Mammary epithelial cell (primary cell): ENCODE measurements at regions of chr9 and their contacts with region 1.

Region 1: GRCh38 chr9:98536542-98537173 is 172.1 kb downstream of the GABBR2 start:
- DNase-seq: no peak
- H3K4me3 ChIP-seq: no peak overlapping the region
- H3K27ac ChIP-seq: no peak overlapping the region
- H3K4me1 ChIP-seq: no peaks in the 10 kb centered on the region
- H3K27me3 ChIP-seq: no peaks in the 10 kb centered on the region
- CTCF ChIP-seq: peak; percentile 20 to 40

Region 2: GRCh38 chr9:98570663-98571440 is 34.2 kb after region 1 on chr9:
- CTCF ChIA-PET with region 1: no interaction called
- dilution Hi-C with region 1: no loop called
- in situ Hi-C with region 1: no loop called
- intact Hi-C with region 1: no loop called
- DNase-seq: no peak
- H3K4me3 ChIP-seq: no peak overlapping the region
- H3K27ac ChIP-seq: no peak overlapping the region
- H3K4me1 ChIP-seq: peaks cover 9% of the 10 kb centered on the region
- H3K27me3 ChIP-seq: peaks cover 14% of the 10 kb centered on the region
- CTCF ChIP-seq: no peak

Region 3: DNA sequence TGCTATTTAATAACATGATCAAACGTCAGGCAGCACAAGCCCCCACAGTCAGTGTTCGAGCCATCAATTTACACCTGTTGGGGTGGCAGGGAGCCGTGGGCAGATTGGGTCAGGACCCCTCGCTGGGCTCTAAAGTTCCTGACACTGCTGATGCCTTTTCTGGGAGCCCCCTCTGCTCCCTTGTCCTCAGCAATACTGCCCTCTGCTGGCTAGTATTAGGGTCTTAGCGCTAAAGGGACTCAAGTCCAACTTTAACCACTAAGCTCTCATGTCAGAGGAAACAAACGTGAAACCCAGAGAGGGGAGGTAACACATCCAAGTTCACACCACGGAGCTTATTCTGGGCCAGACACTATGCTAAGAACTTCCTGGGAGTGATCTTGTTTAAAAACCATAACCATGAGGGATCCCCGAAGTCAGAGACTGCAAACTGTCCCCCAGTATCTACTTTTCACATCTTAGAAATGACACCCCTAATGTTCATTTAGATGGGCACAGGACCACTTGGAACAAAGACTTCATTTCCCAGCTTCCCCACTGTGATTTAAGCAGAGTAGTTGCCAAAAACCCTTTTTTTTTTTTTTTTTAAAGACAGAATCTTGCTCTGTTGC is 239.3 kb after region 1 on chr9:
- CTCF ChIA-PET with region 1: no interaction called
- dilution Hi-C with region 1: no loop called
- in situ Hi-C with region 1: no loop called
- intact Hi-C with region 1: loop called (anchors 5 kb)
- DNase-seq: peak; percentile 20
- H3K4me3 ChIP-seq: no peak overlapping the region
- H3K27ac ChIP-seq: no peak overlapping the region
- H3K4me1 ChIP-seq: no peaks in the 10 kb centered on the region
- H3K27me3 ChIP-seq: no peaks in the 10 kb centered on the region
- CTCF ChIP-seq: peak; percentile 80 to 83

Region 4: GRCh38 chr9:98791147-98792095 is 254.8 kb after region 1 on chr9:
- CTCF ChIA-PET with region 1: no interaction called
- dilution Hi-C with region 1: no loop called
- in situ Hi-C with region 1: no loop called
- intact Hi-C with region 1: loop called (anchors 2 kb)
- DNase-seq: peak; percentile 94
- H3K4me3 ChIP-seq: no peak overlapping the region
- H3K27ac ChIP-seq: peak overlapping the region; percentile 22
- H3K4me1 ChIP-seq: peaks cover 27% of the 10 kb centered on the region
- H3K27me3 ChIP-seq: no peaks in the 10 kb centered on the region
- CTCF ChIP-seq: peak; percentile 95 to 99

Region 5: DNA sequence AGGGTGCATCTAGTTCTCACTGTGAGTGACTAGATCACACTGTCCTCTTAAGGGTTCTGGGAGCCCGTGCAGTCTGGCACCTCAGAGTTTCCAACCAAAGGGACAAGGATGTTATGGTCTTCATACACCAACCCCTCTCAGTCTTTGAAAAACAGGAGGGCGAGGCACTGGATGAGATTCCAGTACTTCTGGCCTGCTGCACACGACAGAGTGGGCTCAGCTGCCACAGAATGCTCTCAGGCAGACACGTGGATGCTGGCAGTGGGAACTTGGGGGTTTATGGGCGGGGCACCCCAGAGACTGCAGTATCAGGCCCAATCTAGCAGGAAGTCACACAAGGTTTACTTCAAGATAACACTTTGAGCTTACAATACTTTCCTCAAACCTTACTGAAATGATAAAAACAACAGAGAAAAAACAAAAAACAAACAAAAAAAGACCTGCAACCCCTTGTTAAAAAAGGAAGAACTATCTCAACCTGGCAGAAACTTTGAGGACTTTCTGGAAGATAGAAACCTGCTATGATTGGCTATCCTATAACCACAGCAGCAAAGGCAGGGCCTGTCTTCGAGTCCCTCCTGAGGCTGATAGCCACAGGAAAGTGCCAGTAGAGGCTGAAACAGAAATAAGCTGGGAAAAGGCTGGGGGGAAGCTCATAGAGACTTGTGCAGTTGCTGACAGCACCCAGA is 540.0 kb after region 1 on chr9:
- CTCF ChIA-PET with region 1: no interaction called
- dilution Hi-C with region 1: no loop called
- in situ Hi-C with region 1: no loop called
- intact Hi-C with region 1: no loop called
- DNase-seq: no peak
- H3K4me3 ChIP-seq: no peak overlapping the region
- H3K27ac ChIP-seq: no peak overlapping the region
- H3K4me1 ChIP-seq: no peaks in the 10 kb centered on the region
- H3K27me3 ChIP-seq: peaks cover 2% of the 10 kb centered on the region
- CTCF ChIP-seq: no peak